ENCODE measurements at regions of chr12 and their contacts with region 1.

Region 1: GRCh38 chr12:30754709-30755394 is at the start of gene CAPRIN2:
- DNase-seq: peak; percentile 86 to 95
- H3K4me3 ChIP-seq: peak within 1 kb of the TSS; percentile 70 to 98 (median 86)
- H3K27ac ChIP-seq: peak within 1 kb of the TSS; percentile 68; the same call in 1 of the 2 replicates
- H3K4me1 ChIP-seq: peaks cover 3 to 6% (median 4%) of the 10 kb centered on the region in 4 experiments; a peak in 5 of 7 replicates
- H3K27me3 ChIP-seq: no peaks in the 10 kb centered on the region
- CTCF ChIP-seq: peak; percentile 46 to 58 (median 51)
- EP300 ChIP-seq: no peak
- POLR2A ChIP-seq: peak in 1 of 2 experiments; percentile 48; a peak in 1 of 3 replicates
- RAD21 ChIP-seq: peak; percentile 62 to 69
- total RNA-seq, gene CAPRIN2: 51.5 and 52.0 TPM in 2 replicates

Region 2: DNA sequence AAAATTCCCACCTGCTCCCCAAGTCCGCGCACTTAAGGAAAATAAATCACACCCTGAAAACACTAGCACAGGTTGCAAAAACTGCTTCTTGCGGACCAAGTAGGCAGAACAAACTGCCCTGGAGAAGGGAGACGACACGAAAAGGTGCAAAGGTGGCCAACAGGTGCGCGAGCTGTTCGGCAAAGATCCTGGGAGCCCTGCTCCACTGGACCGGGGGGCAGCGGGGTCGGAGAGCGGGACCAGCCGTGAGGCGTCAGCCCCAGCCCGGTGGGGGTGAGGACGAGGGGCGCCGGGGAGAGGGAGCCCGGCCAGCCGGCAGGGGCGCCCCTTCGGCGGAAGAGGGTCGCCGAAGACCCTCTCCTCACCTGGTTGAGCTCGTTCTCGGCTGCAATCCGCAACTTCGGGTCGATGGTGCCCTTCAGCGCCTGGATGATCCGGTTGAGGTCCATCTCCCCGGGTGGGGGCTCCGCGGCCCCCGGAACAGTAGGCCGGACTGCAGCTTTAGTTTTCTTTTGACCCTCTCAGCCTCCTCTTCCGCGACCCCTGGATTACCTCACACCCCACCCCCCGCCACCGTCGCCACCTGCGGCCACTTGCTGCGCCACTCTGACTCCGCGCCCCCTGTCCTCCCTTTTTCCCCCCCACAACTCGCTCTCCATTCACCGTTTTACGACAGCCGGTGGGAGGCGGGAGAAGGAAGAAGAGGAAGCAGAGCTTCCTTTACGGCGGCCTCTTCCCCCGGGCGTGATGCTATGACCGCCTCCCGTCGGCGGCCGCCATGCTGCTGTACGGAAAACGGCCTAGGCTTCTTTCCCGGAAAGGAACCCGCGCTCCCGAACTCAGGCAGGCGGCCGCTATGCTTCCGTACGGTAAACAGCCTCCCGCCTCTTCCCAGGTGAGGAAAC is 59.4 kb before region 1 on chr12 and contains the start of gene IPO8:
- CTCF ChIA-PET with region 1: interaction called, 4 read pairs
- POLR2A ChIA-PET with region 1: interaction called, 17 read pairs
- DNase-seq: peak; percentile 86 to 91
- H3K4me3 ChIP-seq: peak within 1 kb of the TSS; percentile 71 to 92 (median 90)
- H3K27ac ChIP-seq: peak within 1 kb of the TSS; percentile 68; the same call in 1 of the 2 replicates
- H3K4me1 ChIP-seq: peaks cover 0 to 4% (median 2%) of the 10 kb centered on the region in 4 experiments; a peak in 5 of 7 replicates
- H3K27me3 ChIP-seq: no peaks in the 10 kb centered on the region
- CTCF ChIP-seq: peak; percentile 6 to 42 (median 33); a peak in 2 of 4 replicates
- EP300 ChIP-seq: peak in 1 of 2 experiments; percentile 10; a peak in 1 of 3 replicates
- POLR2A ChIP-seq: peak in 1 of 2 experiments; percentile 71; a peak in 2 of 3 replicates
- RAD21 ChIP-seq: 0 out of 4 replicates have a peak, but pooled peaks of 1 of the 2 experiments have one; percentile 0
- total RNA-seq, gene IPO8: 51.0 and 59.8 TPM in 2 replicates

Region 3: GRCh38 chr12:30732954-30733637 is 21.8 kb before region 1 on chr12:
- CTCF ChIA-PET with region 1: interaction called, 19 read pairs
- POLR2A ChIA-PET with region 1: interaction called, 4 read pairs
- DNase-seq: no peak
- H3K4me3 ChIP-seq: no peak overlapping the region
- H3K27ac ChIP-seq: no peak overlapping the region
- H3K4me1 ChIP-seq: no peaks in the 10 kb centered on the region
- H3K27me3 ChIP-seq: no peaks in the 10 kb centered on the region
- CTCF ChIP-seq: no peak
- EP300 ChIP-seq: no peak
- POLR2A ChIP-seq: no peak
- RAD21 ChIP-seq: no peak

Region 4: GRCh38 chr12:30795410-30796312 is 40.8 kb after region 1 on chr12:
- CTCF ChIA-PET with region 1: interaction called, 20 read pairs
- POLR2A ChIA-PET with region 1: interaction called, 22 read pairs
- DNase-seq: peak in 1 of 2 experiments; percentile 88
- H3K4me3 ChIP-seq: peak overlapping the region; percentile 52 to 79 (median 58)
- H3K27ac ChIP-seq: no peak overlapping the region; the same call in 1 of the 2 replicates
- H3K4me1 ChIP-seq: peaks cover 13 to 22% (median 18%) of the 10 kb centered on the region in 4 experiments
- H3K27me3 ChIP-seq: peaks cover 0 to 10% (median 4%) of the 10 kb centered on the region in 4 experiments; a peak in 6 of 7 replicates
- CTCF ChIP-seq: peak in 2 of 3 experiments; percentile 14 to 26; a peak in 2 of 4 replicates
- EP300 ChIP-seq: no peak
- POLR2A ChIP-seq: peak in 1 of 2 experiments; percentile 49; a peak in 1 of 3 replicates
- RAD21 ChIP-seq: 0 out of 4 replicates have a peak, but pooled peaks of 1 of the 2 experiments have one; percentile 3

Region 5: GRCh38 chr12:30806989-30807694 is 52.3 kb after region 1 on chr12:
- CTCF ChIA-PET with region 1: interaction called, 25 read pairs
- POLR2A ChIA-PET with region 1: interaction called, 3 read pairs
- DNase-seq: peak in 1 of 2 experiments; percentile 55
- H3K4me3 ChIP-seq: no peak overlapping the region
- H3K27ac ChIP-seq: no peak overlapping the region
- H3K4me1 ChIP-seq: no peaks in the 10 kb centered on the region
- H3K27me3 ChIP-seq: no peaks in the 10 kb centered on the region
- CTCF ChIP-seq: peak in 2 of 3 experiments; percentile 72 to 74; a peak in 3 of 4 replicates
- EP300 ChIP-seq: no peak
- POLR2A ChIP-seq: no peak
- RAD21 ChIP-seq: peak; percentile 94 to 98

Measured in H1 (cell line).